MCF 10A (cell line): ENCODE measurements at regions of chr1 and their contacts with region 1.

Region 1: GRCh38 chr1:204506961-204507387 is 9.2 kb upstream of the MDM4 start:
- DNase-seq: peak; percentile 98
- H3K4me3 Mint-ChIP-seq: peak overlapping the region; percentile 77
- H3K27ac Mint-ChIP-seq: peak overlapping the region; percentile 90
- H3K4me1 Mint-ChIP-seq: peaks cover 29% of the 10 kb centered on the region
- H3K27me3 Mint-ChIP-seq: no peaks in the 10 kb centered on the region
- CTCF ChIP-seq: no peak

Region 2: DNA sequence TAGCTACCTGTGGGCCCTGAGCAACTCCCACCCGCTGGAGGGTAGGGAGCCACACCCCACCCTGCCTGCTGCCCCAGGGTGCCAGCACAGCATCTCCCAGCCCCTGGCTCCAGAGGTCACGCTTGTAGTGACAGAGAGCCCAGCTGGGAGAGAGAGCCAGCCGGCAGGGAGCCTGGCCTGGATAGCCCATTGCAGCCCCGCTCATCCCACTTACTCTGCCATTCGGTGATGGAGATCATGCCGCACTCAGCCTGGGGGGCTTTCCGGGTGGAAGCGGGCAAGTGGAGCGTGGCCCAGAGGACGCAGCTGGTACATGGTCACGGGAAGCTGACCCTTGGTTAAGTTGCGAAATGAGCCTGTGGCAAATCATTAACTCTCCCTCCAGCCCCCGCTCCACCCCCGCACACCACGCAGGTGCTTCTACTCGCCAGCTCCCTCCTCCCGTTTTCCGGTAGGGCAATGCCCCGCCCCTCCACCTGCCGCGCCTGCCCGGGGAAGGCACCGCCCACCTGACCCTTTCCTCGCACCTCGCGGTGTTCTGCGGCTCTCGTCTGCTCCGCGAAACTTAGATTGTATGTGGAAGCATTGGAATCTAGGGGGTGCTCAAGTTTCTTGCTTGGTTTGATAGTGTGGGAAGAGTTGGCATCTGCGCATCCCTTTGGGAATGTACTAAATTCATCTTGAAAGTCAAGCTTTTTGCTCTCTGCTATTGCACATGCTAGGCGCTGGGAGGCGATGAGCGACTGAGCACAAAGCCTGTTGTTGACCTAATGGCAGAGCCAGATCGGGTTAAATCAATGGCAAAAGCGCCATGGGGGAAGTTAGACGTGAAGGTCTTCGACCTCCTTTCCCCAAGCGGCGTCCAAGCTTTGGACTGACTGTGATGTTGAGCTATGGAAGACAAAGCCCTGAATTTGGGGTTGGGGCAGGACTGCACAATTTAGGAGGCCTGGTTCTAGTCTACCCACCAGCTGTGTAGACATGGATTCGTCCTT is 293.0 kb before region 1 on chr1 and contains the start of gene GOLT1A:
- CTCF ChIA-PET with region 1: interaction called, 4 read pairs
- POLR2A ChIA-PET with region 1: no interaction called
- intact Hi-C with region 1: loop called (anchors 1 kb)
- DNase-seq: peak; percentile 93
- H3K4me3 Mint-ChIP-seq: peak within 1 kb of the TSS; percentile 68
- H3K27ac Mint-ChIP-seq: peak within 1 kb of the TSS; percentile 8
- H3K4me1 Mint-ChIP-seq: peaks cover 6% of the 10 kb centered on the region
- H3K27me3 Mint-ChIP-seq: no peaks in the 10 kb centered on the region
- CTCF ChIP-seq: peak; percentile 93
- total RNA-seq, gene GOLT1A: 11.5 and 12.7 TPM in 2 replicates

Region 3: GRCh38 chr1:204377795-204378608 is 129.0 kb before region 1 on chr1:
- CTCF ChIA-PET with region 1: interaction called, 18 read pairs
- POLR2A ChIA-PET with region 1: interaction called, 13 read pairs
- intact Hi-C with region 1: no loop called
- DNase-seq: peak; percentile 46
- H3K4me3 Mint-ChIP-seq: peak overlapping the region; percentile 70
- H3K27ac Mint-ChIP-seq: no peak overlapping the region
- H3K4me1 Mint-ChIP-seq: peaks cover 5% of the 10 kb centered on the region
- H3K27me3 Mint-ChIP-seq: no peaks in the 10 kb centered on the region
- CTCF ChIP-seq: no peak

Region 4: GRCh38 chr1:204417231-204417997 is 89.6 kb before region 1 on chr1:
- CTCF ChIA-PET with region 1: interaction called, 1,125 read pairs
- POLR2A ChIA-PET with region 1: interaction called, 62 read pairs
- intact Hi-C with region 1: no loop called
- DNase-seq: peak; percentile 100
- H3K4me3 Mint-ChIP-seq: peak overlapping the region; percentile 65
- H3K27ac Mint-ChIP-seq: peak overlapping the region; percentile 91
- H3K4me1 Mint-ChIP-seq: peaks cover 48% of the 10 kb centered on the region
- H3K27me3 Mint-ChIP-seq: no peaks in the 10 kb centered on the region
- CTCF ChIP-seq: no peak

Region 5: GRCh38 chr1:204438628-204439027 is 68.3 kb before region 1 on chr1:
- CTCF ChIA-PET with region 1: interaction called, 1,125 read pairs
- POLR2A ChIA-PET with region 1: interaction called, 253 read pairs
- intact Hi-C with region 1: loop called (anchors 2 kb)
- DNase-seq: peak; percentile 99
- H3K4me3 Mint-ChIP-seq: peak overlapping the region; percentile 6
- H3K27ac Mint-ChIP-seq: peak overlapping the region; percentile 94
- H3K4me1 Mint-ChIP-seq: peaks cover 65% of the 10 kb centered on the region
- H3K27me3 Mint-ChIP-seq: no peaks in the 10 kb centered on the region
- CTCF ChIP-seq: no peak

Region 6: DNA sequence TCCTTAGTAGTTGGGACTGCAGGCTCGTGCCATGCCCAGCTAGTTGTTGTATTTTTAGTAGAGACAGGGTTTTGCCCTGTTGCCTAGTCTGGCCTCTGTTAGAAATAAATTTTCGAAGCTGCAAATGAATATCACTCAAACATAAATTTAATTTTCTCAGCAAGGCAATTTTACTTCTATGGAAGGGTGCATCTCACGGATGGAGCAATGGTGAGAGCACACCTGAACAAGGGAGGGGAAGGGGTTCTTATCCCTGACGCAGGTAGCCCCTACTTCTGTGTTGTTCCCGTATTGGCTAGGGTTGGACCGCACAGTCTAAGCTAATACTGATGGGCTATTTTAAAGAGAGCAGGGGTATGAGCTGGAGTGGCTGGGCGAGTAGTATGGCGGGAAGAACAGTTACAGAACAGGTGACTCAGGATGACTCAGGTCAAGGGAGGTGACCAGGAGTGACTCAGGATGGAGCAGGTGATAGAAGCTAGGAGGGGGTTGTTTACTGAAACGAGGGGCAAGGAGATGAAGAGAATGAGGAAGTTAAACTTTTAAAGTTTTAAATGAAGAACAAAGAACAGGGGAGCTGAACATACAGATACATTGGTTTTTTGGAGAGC is 16.7 kb after region 1 on chr1:
- CTCF ChIA-PET with region 1: interaction called, 9 read pairs
- POLR2A ChIA-PET with region 1: interaction called, 232 read pairs
- intact Hi-C with region 1: no loop called
- DNase-seq: peak; percentile 50
- H3K4me3 Mint-ChIP-seq: peak overlapping the region; percentile 1
- H3K27ac Mint-ChIP-seq: peak overlapping the region; percentile 44
- H3K4me1 Mint-ChIP-seq: peaks cover 33% of the 10 kb centered on the region
- H3K27me3 Mint-ChIP-seq: no peaks in the 10 kb centered on the region
- CTCF ChIP-seq: no peak